Heart right ventricle (tissue), 16 donors: ENCODE measurements at regions of chr6 and their contacts with region 1.

Region 1: DNA sequence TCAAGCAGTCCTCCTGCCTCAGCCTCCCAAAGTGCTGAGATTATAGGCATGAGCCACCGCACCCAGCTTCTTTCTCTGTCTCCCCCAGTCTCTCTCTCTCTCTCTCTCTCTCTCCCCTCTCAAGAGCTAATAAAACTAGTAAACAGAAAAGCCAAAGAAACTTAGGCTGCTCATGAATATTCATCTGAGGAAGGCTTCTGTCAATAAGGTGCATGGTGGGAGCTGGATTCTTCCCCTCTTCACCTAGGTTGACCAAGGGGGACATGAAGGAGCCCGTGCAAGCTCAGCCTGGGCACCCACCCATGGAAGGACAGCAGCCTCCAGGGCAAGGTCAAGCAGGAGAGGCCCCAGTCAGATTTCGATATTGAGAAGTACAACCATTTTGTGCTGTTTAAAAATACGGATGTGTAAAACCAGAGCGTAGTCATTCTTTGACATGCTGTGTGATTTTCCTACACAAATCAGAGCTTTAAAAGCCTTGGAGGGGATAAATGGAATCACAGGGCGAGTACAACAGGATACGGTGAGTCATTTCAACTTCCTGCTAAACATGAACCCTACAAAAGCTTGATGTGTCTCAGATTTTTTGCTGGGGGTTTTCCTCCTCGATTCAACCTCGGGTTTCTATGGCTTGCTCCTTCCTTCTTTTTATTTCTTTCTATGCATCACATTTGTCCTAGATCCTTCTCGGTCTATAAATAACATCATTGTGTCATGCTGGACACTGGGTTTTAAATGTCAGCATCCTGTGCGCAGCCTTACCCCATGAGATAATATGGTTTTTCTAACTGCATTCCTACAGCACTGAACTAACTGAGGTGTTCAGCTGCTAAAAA is 368.9 kb upstream of the JARID2 start:
- DNase-seq: peak in 1 of 2 donors; percentile 29
- ATAC-seq: peak; percentile 75 to 92 (median 88)
- H3K4me3 ChIP-seq: no peak overlapping the region
- H3K27ac ChIP-seq: peak overlapping the region; percentile 48 to 89 (median 76)
- H3K4me1 ChIP-seq: peaks cover 11 to 64% (median 45%) of the 10 kb centered on the region in 9 donors
- H3K27me3 ChIP-seq: no peaks in the 10 kb centered on the region
- CTCF ChIP-seq: no peak

Region 2: GRCh38 chr6:14431385-14432330 is 445.3 kb before region 1 on chr6:
- intact Hi-C with region 1: loop called in 1 of 10 experiments (anchors 10 kb)
- DNase-seq: peak in 1 of 2 donors; percentile 44
- ATAC-seq: peak; percentile 83 to 95 (median 94)
- H3K4me3 ChIP-seq: peak overlapping the region in 9 of 10 donors; percentile 16 to 52 (median 40)
- H3K27ac ChIP-seq: peak overlapping the region in 9 of 10 donors; percentile 48 to 77 (median 62)
- H3K4me1 ChIP-seq: peaks cover 0 to 38% (median 0%) of the 10 kb centered on the region in 9 donors
- H3K27me3 ChIP-seq: no peaks in the 10 kb centered on the region
- CTCF ChIP-seq: no peak

Region 3: DNA sequence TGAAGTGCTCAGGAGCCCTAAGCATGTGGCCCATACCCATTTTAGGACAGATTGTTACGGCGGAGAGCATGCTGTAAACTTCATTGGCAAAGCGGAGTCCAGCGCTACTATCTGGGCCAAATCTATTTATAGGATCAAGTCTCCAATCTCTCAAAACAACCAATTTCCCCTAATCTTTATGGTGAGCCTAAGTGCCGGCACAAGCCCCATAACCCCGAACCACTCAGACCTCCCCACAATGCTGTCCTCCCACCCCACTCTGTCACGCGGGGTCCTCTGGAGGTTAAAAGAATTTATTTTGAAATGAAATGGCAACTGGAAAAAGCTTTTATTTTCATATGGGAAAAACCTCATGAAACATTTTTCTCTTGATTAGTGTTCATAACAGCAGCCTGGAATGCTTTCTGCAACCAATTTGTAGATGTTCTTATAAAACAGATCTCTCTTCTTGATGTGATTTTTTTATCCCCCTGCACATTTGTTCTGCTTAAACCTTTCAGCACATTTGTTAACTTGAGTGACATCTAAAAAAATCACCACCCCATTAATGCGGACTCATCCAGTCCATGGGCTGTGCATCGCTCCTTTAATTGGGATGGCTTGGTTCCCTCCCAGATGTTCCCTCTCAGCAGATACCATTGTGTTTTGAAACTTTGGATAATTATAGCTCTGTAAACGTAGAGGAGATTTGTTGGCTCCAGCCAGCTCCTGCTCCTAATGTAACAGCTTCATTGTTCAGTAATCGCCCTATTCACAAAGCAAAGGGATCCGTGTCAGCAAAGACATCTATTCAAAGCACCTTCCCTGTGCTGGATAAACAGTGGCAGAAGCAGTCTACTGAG is 435.8 kb before region 1 on chr6:
- intact Hi-C with region 1: loop called in 2 of 10 experiments (anchors 10 kb)
- DNase-seq: peak in 1 of 2 donors; percentile 39
- ATAC-seq: peak; percentile 79 to 94 (median 92)
- H3K4me3 ChIP-seq: peak overlapping the region in 3 of 10 donors; percentile 7 to 19 (median 18)
- H3K27ac ChIP-seq: peak overlapping the region in 9 of 10 donors; percentile 44 to 79 (median 61)
- H3K4me1 ChIP-seq: peaks cover 3 to 46% (median 27%) of the 10 kb centered on the region in 9 donors
- H3K27me3 ChIP-seq: no peaks in the 10 kb centered on the region
- CTCF ChIP-seq: no peak

Region 4: GRCh38 chr6:15036690-15037245 is 159.8 kb after region 1 on chr6:
- intact Hi-C with region 1: loop called in 1 of 10 experiments (anchors 10 kb)
- DNase-seq: peak; percentile 79 to 84
- ATAC-seq: peak; percentile 89 to 99 (median 96)
- H3K4me3 ChIP-seq: peak overlapping the region in 3 of 10 donors; percentile 10 to 23 (median 14)
- H3K27ac ChIP-seq: peak overlapping the region in 8 of 10 donors; percentile 44 to 69 (median 64)
- H3K4me1 ChIP-seq: peaks cover 0 to 14% (median 4%) of the 10 kb centered on the region in 9 donors
- H3K27me3 ChIP-seq: no peaks in the 10 kb centered on the region
- CTCF ChIP-seq: no peak

Region 5: DNA sequence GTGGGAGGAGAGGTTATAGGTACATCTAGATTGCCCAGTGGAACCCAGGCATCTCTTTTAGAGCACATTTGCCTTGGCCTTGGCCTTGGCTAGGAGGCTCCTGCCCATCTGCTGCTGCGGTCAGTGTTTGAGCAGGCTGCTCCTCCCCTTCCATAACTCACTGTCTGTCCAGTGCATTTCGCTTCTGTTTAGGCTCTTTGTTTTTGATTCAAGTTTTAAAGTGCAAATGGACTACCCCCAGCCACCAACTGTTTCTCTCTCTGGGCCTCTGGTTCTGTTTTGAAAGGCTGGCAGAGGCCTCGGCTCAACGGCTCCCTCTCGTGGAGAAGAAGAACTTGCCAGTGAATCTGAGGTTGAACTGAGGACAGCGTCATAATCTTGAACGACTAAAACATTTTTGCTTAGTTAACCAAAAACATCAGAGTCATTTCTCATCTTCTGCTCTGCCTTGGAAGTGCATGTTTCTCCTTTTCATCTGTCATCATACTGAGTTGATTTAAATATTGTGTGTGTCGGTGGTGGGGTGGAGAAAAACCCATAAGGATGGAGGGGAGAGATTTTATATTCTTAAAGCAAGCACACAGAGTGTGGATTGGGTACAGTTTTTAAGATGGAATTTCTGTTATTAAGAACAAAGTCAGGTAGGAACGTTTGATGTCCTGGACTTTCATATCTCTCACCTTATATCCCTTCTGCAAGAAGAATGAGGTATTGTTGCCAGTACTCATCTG is 614.4 kb after region 1 on chr6:
- intact Hi-C with region 1: loop called in 1 of 10 experiments (anchors 10 kb)
- DNase-seq: peak; percentile 72 to 84
- ATAC-seq: peak in 7 of 8 donors; percentile 55 to 86 (median 78)
- H3K4me3 ChIP-seq: no peak overlapping the region
- H3K27ac ChIP-seq: peak overlapping the region in 5 of 10 donors; percentile 9 to 55 (median 36)
- H3K4me1 ChIP-seq: peaks cover 4 to 43% (median 29%) of the 10 kb centered on the region in 9 donors
- H3K27me3 ChIP-seq: no peaks in the 10 kb centered on the region
- CTCF ChIP-seq: peak; percentile 88 to 98 (median 97)